Activated CD8-positive, alpha-beta T cell treated with anti-CD3 and anti-CD28 coated beads for 36 hours (primary cell): ENCODE measurements at regions of chr12 and their contacts with region 1.

Region 1: GRCh38 chr12:53427905-53428594 is 4.4 kb downstream of the AMHR2 start:
- DNase-seq: peak; percentile 62
- ATAC-seq: peak; percentile 99
- H3K4me3 Mint-ChIP-seq: no peak overlapping the region
- H3K27ac Mint-ChIP-seq: no peak overlapping the region
- H3K4me1 Mint-ChIP-seq: peaks cover 9% of the 10 kb centered on the region
- H3K27me3 Mint-ChIP-seq: no peaks in the 10 kb centered on the region
- CTCF ChIP-seq: no peak

Region 2: GRCh38 chr12:53274445-53274844 is 153.6 kb before region 1 on chr12:
- CTCF ChIA-PET with region 1: no interaction called
- POLR2A ChIA-PET with region 1: no interaction called
- intact Hi-C with region 1: no loop called
- DNase-seq: no peak
- ATAC-seq: no peak
- H3K4me3 Mint-ChIP-seq: no peak overlapping the region
- H3K27ac Mint-ChIP-seq: no peak overlapping the region
- H3K4me1 Mint-ChIP-seq: peaks cover 21% of the 10 kb centered on the region
- H3K27me3 Mint-ChIP-seq: no peaks in the 10 kb centered on the region
- CTCF ChIP-seq: no peak

Region 3: GRCh38 chr12:53379389-53380103 is 48.5 kb before region 1 on chr12:
- CTCF ChIA-PET with region 1: no interaction called
- POLR2A ChIA-PET with region 1: no interaction called
- intact Hi-C with region 1: loop called (anchors 5 kb)
- DNase-seq: peak; percentile 99
- ATAC-seq: peak; percentile 76
- H3K4me3 Mint-ChIP-seq: no peak overlapping the region
- H3K27ac Mint-ChIP-seq: no peak overlapping the region
- H3K4me1 Mint-ChIP-seq: peaks cover 36% of the 10 kb centered on the region
- H3K27me3 Mint-ChIP-seq: no peaks in the 10 kb centered on the region
- CTCF ChIP-seq: no peak

Region 4: GRCh38 chr12:53456654-53457366 is 28.8 kb after region 1 on chr12:
- CTCF ChIA-PET with region 1: no interaction called
- POLR2A ChIA-PET with region 1: no interaction called
- intact Hi-C with region 1: no loop called
- DNase-seq: no peak
- ATAC-seq: no peak
- H3K4me3 Mint-ChIP-seq: no peak overlapping the region
- H3K27ac Mint-ChIP-seq: no peak overlapping the region
- H3K4me1 Mint-ChIP-seq: peaks cover 59% of the 10 kb centered on the region
- H3K27me3 Mint-ChIP-seq: no peaks in the 10 kb centered on the region
- CTCF ChIP-seq: no peak